ENCODE measurements at regions of chr16 and their contacts with region 1.

Region 1: DNA sequence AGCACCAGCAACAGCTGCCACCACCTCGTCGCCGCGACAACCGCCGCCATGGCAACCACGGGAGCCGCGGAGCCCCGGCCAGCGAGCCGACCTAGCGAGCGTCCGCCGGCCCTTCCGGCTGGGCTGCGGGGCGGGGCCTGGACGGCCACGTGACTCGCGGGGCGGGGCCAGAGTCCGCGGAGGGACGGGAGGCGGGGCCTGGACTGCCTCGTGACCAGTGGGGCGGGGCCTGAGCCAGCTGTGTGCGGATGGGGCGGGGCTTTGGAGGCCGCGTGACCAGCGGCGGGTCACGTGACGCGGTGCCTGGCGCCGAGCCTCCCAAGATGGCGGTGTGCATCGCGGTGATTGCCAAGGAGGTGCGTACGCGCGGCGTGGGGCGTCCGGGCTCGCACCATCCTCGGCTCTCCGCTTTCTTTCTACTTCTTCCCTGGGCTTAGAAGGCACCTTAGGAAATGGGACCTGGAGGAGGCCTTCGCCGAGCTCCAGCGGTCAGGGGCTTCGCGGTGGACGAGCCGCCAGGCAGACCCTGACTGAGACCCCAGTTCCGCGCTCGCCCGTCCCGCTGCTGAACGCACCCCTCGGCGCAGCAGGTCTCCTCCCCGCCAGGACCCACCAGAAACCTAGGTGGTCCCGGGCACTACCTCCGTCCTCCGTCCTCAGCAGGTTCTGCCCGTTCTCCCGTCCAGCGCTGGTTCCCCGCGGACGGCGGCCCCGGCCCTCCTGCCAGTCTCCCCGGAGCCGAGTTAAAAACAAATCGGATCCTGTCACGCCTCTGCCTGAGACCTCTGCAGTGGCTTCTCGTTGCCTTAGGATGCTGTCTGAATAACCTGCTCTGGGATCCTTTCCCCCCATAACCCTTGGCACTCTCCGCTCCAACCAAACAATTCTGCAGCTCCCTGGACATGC is at the starts of genes GALNS and TRAPPC2L:
- DNase-seq: peak; percentile 91
- ATAC-seq: peak; percentile 98
- H3K4me3 ChIP-seq: peak within 1 kb of the TSS; percentile 97
- H3K27ac ChIP-seq: peak within 1 kb of the TSS; percentile 86
- H3K4me1 ChIP-seq: peaks cover 9% of the 10 kb centered on the region
- H3K27me3 ChIP-seq: no peaks in the 10 kb centered on the region
- CTCF ChIP-seq: no peak
- POLR2A ChIP-seq: peak; percentile 80
- RAD21 ChIP-seq: no peak
- total RNA-seq, gene GALNS: 7.2 TPM in 2 replicates
- total RNA-seq, gene TRAPPC2L: 84.2 and 102 TPM in 2 replicates

Region 2: DNA sequence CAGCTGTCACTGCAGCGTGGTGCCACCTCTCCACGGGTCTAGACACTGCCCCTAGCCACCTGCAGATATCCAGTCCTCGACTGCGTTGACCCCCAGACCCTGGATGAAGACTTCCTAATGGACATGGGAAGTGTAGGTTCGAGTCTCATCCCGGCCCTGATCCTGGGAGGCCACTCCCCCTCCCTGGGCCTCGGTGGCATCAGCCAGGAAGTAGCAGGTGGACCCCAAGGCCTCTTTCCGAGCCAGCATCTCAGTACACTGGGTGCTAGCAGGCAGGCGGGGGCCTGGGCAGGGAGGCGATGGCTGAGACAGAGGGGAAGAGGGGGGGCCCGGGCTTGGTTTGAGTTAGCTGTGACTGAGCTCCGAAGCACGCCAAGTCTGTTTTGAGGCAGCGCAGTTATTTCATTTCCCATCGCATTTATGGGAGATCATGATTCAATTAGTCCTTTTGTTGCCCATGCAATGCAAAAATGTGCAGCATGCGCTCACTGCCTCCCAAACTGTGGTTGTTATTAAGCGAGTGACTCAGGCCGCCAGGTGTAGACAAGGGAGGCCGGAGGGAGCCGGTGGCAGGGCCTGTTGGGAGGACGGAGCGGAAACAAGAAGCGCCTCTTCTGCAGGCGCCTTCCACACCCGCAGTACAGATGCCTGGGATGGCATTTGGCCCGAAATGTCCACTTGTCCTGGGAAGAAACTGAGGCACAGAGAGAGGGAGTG is 499.6 kb before region 1 on chr16:
- CTCF ChIA-PET with region 1: no interaction called
- POLR2A ChIA-PET with region 1: no interaction called
- dilution Hi-C with region 1: no loop called
- in situ Hi-C with region 1: no loop called
- intact Hi-C with region 1: no loop called
- DNase-seq: no peak
- ATAC-seq: no peak
- H3K4me3 ChIP-seq: no peak overlapping the region
- H3K27ac ChIP-seq: no peak overlapping the region
- H3K4me1 ChIP-seq: no peaks in the 10 kb centered on the region
- H3K27me3 ChIP-seq: peaks cover 7% of the 10 kb centered on the region
- CTCF ChIP-seq: no peak
- POLR2A ChIP-seq: no peak
- RAD21 ChIP-seq: no peak

Region 3: DNA sequence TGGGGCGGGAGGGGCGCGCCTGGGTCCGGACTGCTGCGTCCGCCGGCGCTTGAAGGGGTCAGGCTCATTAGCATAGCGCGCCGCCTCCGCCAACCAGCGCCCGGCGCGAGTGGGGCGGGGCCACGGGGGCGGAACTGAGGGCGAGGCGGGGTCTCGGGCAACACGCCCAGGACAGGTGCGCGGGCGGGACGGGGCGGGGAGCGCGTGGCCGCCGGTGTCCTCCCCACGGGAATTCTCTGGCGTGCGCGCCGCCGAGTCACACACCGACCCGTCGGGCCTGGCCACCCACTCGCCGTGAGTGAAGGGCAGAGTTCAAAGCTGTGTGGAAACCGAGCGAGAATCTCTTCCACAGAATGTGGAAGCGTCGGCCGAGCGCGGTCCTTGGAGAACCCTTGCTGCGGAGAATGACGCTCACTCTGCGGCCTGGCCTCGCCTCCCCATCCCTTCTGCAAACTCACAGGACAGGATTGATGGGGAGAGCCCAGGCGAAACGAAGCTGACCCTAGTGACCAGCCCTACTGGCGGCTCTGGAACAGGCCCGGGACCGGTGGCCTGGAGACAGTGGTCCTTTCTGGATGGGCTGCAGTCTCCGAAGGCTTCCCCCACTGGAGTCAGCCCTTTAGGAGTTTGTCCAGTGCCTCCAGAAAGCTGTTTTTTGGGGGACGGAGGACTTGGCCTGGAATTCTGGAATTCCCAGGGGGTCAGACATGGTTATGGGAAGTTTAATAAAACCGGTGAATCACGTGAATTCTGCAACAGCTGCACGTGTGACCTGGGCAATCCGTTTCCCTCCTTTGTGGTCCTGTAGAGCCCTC is 170.4 kb before region 1 on chr16 and contains the start of gene SNAI3:
- CTCF ChIA-PET with region 1: no interaction called
- POLR2A ChIA-PET with region 1: no interaction called
- dilution Hi-C with region 1: no loop called
- in situ Hi-C with region 1: no loop called
- intact Hi-C with region 1: no loop called
- DNase-seq: peak; percentile 24
- ATAC-seq: peak; percentile 90
- H3K4me3 ChIP-seq: peak within 1 kb of the TSS; percentile 43
- H3K27ac ChIP-seq: no peak within 1 kb of the TSS
- H3K4me1 ChIP-seq: peaks cover 7% of the 10 kb centered on the region; the same call in 1 of the 2 replicates
- H3K27me3 ChIP-seq: peaks cover 40% of the 10 kb centered on the region
- CTCF ChIP-seq: no peak
- POLR2A ChIP-seq: no peak
- RAD21 ChIP-seq: no peak
- total RNA-seq, gene SNAI3: not detected in 2 replicates

Region 4: DNA sequence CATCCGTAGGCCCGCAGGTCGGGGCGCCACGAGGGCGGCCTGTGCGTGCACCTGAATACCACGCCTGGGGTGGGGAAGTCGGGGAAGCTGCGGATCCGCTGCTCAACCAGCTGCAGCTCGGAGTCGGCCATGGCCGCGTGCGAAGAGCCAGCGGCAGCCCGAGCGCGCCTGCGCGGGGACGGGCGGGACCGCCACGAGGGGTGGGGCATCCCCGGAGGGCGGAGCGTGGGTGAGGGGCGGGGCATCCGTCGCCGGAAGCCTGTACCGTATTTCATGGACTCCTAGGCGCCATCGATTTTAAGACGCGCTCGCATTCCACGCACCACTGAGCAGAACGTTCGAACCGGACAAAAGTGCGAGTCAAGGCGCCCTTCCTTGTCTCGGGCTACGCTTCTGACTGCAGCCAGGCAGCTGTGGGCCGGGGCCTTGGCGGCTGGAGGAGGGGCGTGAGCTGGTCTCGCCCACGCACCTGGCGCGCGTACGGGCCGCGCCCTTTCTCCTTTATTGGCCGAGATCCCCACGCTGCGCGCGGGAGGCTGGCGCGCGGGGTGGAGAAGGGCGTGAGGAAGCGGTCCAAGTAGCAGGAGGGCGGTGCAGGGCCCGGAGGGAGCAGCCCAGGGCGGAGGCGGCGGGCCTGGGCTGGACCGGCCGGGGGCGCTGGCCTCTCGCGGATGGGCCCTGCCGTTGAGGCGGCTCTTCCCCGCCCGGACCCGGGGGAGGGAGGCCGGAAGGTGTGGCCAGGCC is 45.1 kb before region 1 on chr16 and contains the start of gene APRT:
- CTCF ChIA-PET with region 1: interaction called, 7 read pairs
- POLR2A ChIA-PET with region 1: no interaction called
- dilution Hi-C with region 1: no loop called
- in situ Hi-C with region 1: no loop called
- intact Hi-C with region 1: loop called (anchors 1 kb)
- DNase-seq: peak; percentile 95
- ATAC-seq: peak; percentile 87
- H3K4me3 ChIP-seq: peak within 1 kb of the TSS; percentile 60
- H3K27ac ChIP-seq: peak within 1 kb of the TSS; percentile 84
- H3K4me1 ChIP-seq: peaks cover 12% of the 10 kb centered on the region
- H3K27me3 ChIP-seq: no peaks in the 10 kb centered on the region
- CTCF ChIP-seq: peak; percentile 53
- POLR2A ChIP-seq: peak; percentile 87
- RAD21 ChIP-seq: peak; percentile 52
- total RNA-seq, gene APRT: 40.5 and 41.7 TPM in 2 replicates

Region 5: DNA sequence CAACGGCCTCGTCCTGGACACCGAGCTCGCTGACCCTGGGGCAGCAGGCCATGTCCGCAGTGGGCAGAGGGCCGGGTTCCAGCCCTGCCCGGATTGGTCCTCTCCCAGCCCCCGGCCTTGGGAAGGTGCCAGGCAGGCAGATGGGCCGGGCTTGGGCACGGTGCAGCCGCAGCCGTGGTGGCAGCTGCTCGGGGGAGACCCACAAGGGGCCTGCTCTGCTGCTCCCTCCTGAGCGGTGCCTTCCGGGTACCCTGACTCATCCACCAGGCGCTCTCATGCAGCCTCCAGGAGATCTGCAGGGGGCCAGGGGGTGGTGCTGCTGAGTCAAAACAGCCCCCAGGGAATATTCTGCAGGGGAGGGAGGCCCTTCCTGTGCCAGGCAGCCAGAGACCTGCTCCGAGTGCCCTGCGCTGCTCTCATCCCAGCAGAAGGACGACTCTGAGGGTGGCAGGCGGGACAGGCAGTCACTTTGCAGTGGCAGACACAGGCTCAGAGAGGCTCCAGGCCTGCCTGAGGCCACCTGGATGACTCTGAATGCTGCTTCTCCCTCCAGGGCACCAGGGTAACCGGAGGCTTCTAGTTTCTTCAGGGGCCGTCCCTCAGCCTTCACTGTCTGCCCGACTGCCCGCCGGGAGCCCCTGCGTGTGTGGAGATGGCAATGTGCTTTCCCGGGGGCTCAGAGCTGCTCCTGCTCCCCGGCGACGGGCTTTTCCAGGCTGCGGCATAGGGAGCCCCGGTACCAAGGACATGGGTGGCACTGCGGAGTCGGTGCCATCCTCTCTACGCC is 68.2 kb after region 1 on chr16:
- CTCF ChIA-PET with region 1: no interaction called
- POLR2A ChIA-PET with region 1: no interaction called
- dilution Hi-C with region 1: no loop called
- in situ Hi-C with region 1: no loop called
- intact Hi-C with region 1: loop called (anchors 5 kb)
- DNase-seq: peak; percentile 73
- ATAC-seq: peak; percentile 90
- H3K4me3 ChIP-seq: no peak overlapping the region
- H3K27ac ChIP-seq: no peak overlapping the region
- H3K4me1 ChIP-seq: peaks cover 12% of the 10 kb centered on the region; the same call in 1 of the 2 replicates
- H3K27me3 ChIP-seq: peaks cover 18% of the 10 kb centered on the region
- CTCF ChIP-seq: peak; percentile 58
- POLR2A ChIP-seq: no peak
- RAD21 ChIP-seq: peak; percentile 46